Activated naive CD4-positive, alpha-beta T cell treated with anti-CD3 and anti-CD28 coated beads, Interleukin-2, amount 10 ng/mL, durations not matched to agents 7 days and 5 days (primary cell): ENCODE measurements at regions of chr15 and their contacts with region 1.

Region 1: DNA sequence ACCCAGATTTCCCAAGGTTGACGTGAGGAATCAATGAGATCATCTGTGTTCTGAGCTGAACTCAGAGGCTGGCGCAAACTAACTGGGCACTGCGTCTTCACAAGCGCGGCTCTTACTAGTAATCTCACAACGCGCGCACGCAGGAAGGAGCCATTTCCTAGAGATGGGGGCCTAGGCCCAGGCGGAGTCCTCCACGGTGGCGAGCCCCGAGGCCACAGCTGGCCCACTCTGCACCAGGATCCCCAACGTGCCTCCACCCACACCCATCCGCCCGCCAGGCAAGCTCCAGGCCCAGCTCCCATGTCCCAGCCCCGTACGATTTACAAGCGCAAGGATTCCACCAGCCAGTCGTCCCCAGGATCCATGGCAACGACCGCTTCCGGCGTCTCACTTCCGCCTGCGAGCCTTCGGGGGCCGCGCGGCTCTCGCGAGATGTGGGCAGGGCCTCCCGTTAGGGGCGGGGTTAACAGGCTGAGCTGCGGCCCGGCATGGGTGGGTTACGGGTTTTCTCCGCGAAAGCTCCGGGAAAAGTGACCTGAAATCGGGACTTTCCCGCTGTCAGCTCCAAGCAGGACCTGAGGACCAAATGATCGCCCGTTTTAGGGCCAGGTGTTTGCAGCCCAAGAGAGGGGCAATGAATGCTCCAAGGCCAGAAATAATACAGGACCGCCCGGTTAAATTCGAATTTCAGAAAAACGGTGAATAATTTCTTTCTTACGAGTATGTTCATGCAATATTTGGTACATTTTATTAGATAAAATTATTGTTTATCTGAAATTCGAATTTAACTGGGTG is at the start of gene WDR73:
- DNase-seq: peak; percentile 98
- H3K4me3 Mint-ChIP-seq: peak within 1 kb of the TSS; percentile 99
- H3K27ac Mint-ChIP-seq: peak within 1 kb of the TSS; percentile 85
- H3K4me1 Mint-ChIP-seq: peaks cover 52% of the 10 kb centered on the region
- H3K27me3 Mint-ChIP-seq: peaks cover 12% of the 10 kb centered on the region

Region 2: GRCh38 chr15:84681831-84682230 is 27.7 kb after region 1 on chr15:
- CTCF ChIA-PET with region 1: no interaction called
- DNase-seq: no peak
- H3K4me3 Mint-ChIP-seq: no peak overlapping the region
- H3K27ac Mint-ChIP-seq: peak overlapping the region; percentile 42
- H3K4me1 Mint-ChIP-seq: no peaks in the 10 kb centered on the region
- H3K27me3 Mint-ChIP-seq: no peaks in the 10 kb centered on the region

Region 3: GRCh38 chr15:84748274-84749110 is 94.4 kb after region 1 on chr15 and contains the start of gene ZNF592:
- CTCF ChIA-PET with region 1: interaction called, 11 read pairs
- DNase-seq: peak; percentile 86
- H3K4me3 Mint-ChIP-seq: peak within 1 kb of the TSS; percentile 92
- H3K27ac Mint-ChIP-seq: peak within 1 kb of the TSS; percentile 96
- H3K4me1 Mint-ChIP-seq: peaks cover 60% of the 10 kb centered on the region
- H3K27me3 Mint-ChIP-seq: no peaks in the 10 kb centered on the region

Region 4: GRCh38 chr15:84879088-84879792 is 225.1 kb after region 1 on chr15:
- CTCF ChIA-PET with region 1: interaction called, 16 read pairs
- DNase-seq: no peak
- H3K4me3 Mint-ChIP-seq: no peak overlapping the region
- H3K27ac Mint-ChIP-seq: no peak overlapping the region
- H3K4me1 Mint-ChIP-seq: peaks cover 4% of the 10 kb centered on the region
- H3K27me3 Mint-ChIP-seq: peaks cover 5% of the 10 kb centered on the region